Common myeloid progenitor, CD34-positive (primary cell): ENCODE measurements at regions of chr1 and their contacts with region 1.

Region 1: DNA sequence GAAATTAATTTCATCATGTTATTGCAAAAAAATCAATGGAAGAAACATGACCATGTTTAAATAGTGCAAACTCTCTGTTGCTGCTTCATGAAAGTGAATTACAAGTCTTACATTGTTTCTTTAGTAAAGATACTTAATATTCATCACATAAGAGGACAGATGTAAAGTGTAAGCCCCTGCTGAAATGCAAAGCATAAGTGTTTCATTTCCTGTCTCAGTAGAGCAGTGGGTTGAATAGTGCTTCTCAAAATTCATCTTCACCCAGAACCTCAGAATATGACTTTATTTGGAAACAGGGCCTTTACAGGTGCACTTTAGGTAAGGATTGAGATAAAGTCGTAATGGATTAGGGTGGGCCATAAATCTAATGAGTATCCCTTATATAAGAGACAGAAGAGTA is 738.4 kb upstream of the RGS18 start:
- DNase-seq: no peak
- H3K4me3 ChIP-seq: no peak overlapping the region
- H3K27ac ChIP-seq: no peak overlapping the region
- H3K4me1 ChIP-seq: no peaks in the 10 kb centered on the region
- H3K27me3 ChIP-seq: no peaks in the 10 kb centered on the region

Region 2: GRCh38 chr1:191142405-191143147 is 277.3 kb before region 1 on chr1:
- CTCF ChIA-PET with region 1: no interaction called
- POLR2A ChIA-PET with region 1: no interaction called
- DNase-seq: no peak
- H3K4me3 ChIP-seq: no peak overlapping the region
- H3K27ac ChIP-seq: no peak overlapping the region
- H3K4me1 ChIP-seq: no peaks in the 10 kb centered on the region
- H3K27me3 ChIP-seq: no peaks in the 10 kb centered on the region

Region 3: GRCh38 chr1:191405417-191405816 is 14.4 kb before region 1 on chr1:
- CTCF ChIA-PET with region 1: no interaction called
- POLR2A ChIA-PET with region 1: no interaction called
- DNase-seq: no peak
- H3K4me3 ChIP-seq: no peak overlapping the region
- H3K27ac ChIP-seq: no peak overlapping the region
- H3K4me1 ChIP-seq: no peaks in the 10 kb centered on the region
- H3K27me3 ChIP-seq: no peaks in the 10 kb centered on the region

Region 4: GRCh38 chr1:191432817-191433216 is 13.0 kb after region 1 on chr1:
- CTCF ChIA-PET with region 1: no interaction called
- POLR2A ChIA-PET with region 1: no interaction called
- DNase-seq: no peak
- H3K4me3 ChIP-seq: no peak overlapping the region
- H3K27ac ChIP-seq: no peak overlapping the region
- H3K4me1 ChIP-seq: no peaks in the 10 kb centered on the region
- H3K27me3 ChIP-seq: no peaks in the 10 kb centered on the region

Region 5: DNA sequence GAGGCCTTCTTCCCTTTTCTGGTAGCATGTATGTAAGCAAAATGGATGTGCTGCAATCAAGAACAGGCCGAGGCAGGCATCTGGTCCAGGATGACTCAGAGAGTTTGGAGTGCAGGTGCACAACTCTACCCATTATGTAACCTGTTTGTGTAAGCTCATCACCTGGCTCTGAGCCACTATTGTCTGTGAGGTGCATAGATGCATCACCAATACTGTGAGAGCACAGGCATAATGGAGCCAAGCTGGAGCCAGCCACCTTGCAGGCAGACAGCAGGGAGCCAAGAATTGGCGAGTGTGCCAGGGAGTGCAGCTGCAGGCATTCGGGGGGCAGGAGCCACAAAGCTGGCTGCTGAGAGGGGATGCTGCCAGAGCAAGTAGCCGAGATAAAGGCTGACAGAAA is 188.5 kb after region 1 on chr1:
- CTCF ChIA-PET with region 1: no interaction called
- POLR2A ChIA-PET with region 1: interaction called, 11 read pairs
- DNase-seq: no peak
- H3K4me3 ChIP-seq: no peak overlapping the region
- H3K27ac ChIP-seq: no peak overlapping the region
- H3K4me1 ChIP-seq: no peaks in the 10 kb centered on the region
- H3K27me3 ChIP-seq: no peaks in the 10 kb centered on the region